H1 (cell line): ENCODE measurements at regions of chr16 and their contacts with region 1.

Region 1: DNA sequence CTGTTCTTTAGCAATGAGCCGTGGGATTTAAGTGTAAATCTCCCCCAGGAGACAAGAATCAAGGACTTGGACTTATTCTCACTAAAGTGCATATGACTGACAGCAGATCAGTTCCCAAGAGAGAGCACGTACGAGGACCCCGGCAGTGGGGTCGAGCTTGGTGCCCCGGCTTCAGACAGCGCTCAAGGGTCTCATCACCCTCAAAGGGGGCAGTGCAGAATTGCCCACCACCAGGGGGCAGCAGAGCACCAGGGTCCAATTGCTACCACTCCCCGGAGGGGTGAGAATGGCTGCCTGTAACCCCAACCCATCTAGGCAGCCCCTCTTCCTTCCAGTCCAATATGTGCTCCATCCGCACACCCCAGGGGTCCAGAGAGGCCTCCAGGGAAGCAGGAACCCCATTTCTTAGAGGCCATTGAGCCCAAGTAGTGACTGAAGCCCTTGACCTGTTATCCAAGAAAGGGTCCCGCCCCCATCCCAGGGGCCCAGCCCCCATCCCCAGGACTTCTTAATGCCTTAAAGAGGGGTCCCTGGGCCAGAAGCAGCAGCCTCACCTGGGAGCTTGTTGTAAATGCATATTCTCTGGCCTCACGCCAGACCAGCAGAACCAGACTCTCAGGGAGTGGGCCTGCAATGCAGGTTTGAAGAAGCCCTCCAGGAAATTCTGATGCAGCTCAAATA is 86.1 kb downstream of the ZDHHC7 start:
- DNase-seq: peak; percentile 29 to 95
- H3K4me3 ChIP-seq: no peak overlapping the region
- H3K27ac ChIP-seq: no peak overlapping the region
- H3K4me1 ChIP-seq: peaks cover 0 to 2% (median 0%) of the 10 kb centered on the region in 4 experiments; a peak in 1 of 7 replicates
- H3K27me3 ChIP-seq: no peaks in the 10 kb centered on the region
- CTCF ChIP-seq: peak; percentile 91 to 92 (median 92)
- EP300 ChIP-seq: no peak
- POLR2A ChIP-seq: no peak
- RAD21 ChIP-seq: peak; percentile 88 to 89

Region 2: GRCh38 chr16:84754353-84754856 is 170.8 kb before region 1 on chr16:
- CTCF ChIA-PET with region 1: interaction called, 23 read pairs
- POLR2A ChIA-PET with region 1: no interaction called
- DNase-seq: peak; percentile 33 to 76
- H3K4me3 ChIP-seq: no peak overlapping the region
- H3K27ac ChIP-seq: no peak overlapping the region
- H3K4me1 ChIP-seq: no peaks in the 10 kb centered on the region
- H3K27me3 ChIP-seq: no peaks in the 10 kb centered on the region
- CTCF ChIP-seq: peak in 2 of 3 experiments; percentile 73 to 79; a peak in 3 of 4 replicates
- EP300 ChIP-seq: no peak
- POLR2A ChIP-seq: no peak
- RAD21 ChIP-seq: peak; percentile 79 to 82

Region 3: GRCh38 chr16:84881702-84882521 is 43.3 kb before region 1 on chr16:
- CTCF ChIA-PET with region 1: interaction called, 15 read pairs
- POLR2A ChIA-PET with region 1: no interaction called
- DNase-seq: no peak
- H3K4me3 ChIP-seq: no peak overlapping the region
- H3K27ac ChIP-seq: no peak overlapping the region
- H3K4me1 ChIP-seq: peaks cover 7 to 20% (median 13%) of the 10 kb centered on the region in 4 experiments
- H3K27me3 ChIP-seq: no peaks in the 10 kb centered on the region
- CTCF ChIP-seq: no peak
- EP300 ChIP-seq: no peak
- POLR2A ChIP-seq: no peak
- RAD21 ChIP-seq: no peak

Region 4: DNA sequence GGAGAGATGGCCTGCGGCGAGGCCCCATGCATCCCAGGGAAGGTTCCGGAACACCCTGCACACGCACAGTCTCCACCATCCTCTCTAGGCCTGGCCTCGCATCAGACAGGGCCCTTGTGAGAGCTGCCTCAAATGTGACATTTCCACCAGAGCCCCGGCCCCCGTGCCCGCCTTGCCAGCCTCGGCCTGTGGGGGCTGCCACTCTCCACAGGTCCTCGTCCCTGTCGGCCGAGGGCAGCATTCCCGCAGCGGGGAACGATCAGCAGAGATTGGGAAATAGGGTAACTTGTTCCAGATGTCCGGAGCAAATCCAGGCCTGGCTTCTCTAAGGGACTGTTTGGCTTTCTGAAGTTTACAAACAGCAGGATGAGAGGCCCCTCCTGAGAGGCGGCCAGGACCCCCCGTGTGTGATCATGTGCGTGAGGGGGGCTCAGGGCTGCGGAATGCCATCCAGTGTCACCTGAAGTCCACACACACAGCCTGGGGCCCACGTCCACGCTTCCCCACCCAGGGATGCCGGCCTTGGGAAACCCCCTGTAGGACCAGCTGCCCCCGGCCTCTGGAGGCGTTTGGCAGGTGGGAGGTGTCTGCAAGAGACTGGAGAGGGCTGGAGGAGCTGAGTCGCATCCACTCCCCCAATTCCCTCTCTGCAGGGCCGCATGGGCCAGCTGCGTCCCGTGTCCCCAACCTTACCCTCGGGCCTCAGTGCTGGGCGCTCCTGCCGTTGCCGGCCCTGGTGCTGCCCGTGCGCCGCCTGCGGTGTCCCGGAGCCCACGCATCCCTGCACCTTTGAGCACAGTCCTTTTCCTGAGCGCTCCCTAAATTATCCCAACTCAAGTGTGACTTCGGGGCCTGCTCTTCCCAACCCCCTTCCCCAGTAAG is 15.7 kb after region 1 on chr16:
- CTCF ChIA-PET with region 1: interaction called, 27 read pairs
- POLR2A ChIA-PET with region 1: interaction called, 3 read pairs
- DNase-seq: no peak
- H3K4me3 ChIP-seq: no peak overlapping the region
- H3K27ac ChIP-seq: no peak overlapping the region
- H3K4me1 ChIP-seq: peaks cover 0 to 3% (median 0%) of the 10 kb centered on the region in 4 experiments; a peak in 1 of 7 replicates
- H3K27me3 ChIP-seq: no peaks in the 10 kb centered on the region
- CTCF ChIP-seq: no peak
- EP300 ChIP-seq: no peak
- POLR2A ChIP-seq: no peak
- RAD21 ChIP-seq: no peak

Region 5: GRCh38 chr16:84970447-84971127 is 45.4 kb after region 1 on chr16:
- CTCF ChIA-PET with region 1: interaction called, 170 read pairs
- POLR2A ChIA-PET with region 1: interaction called, 5 read pairs
- DNase-seq: peak; percentile 67 to 91
- H3K4me3 ChIP-seq: no peak overlapping the region
- H3K27ac ChIP-seq: no peak overlapping the region
- H3K4me1 ChIP-seq: no peaks in the 10 kb centered on the region
- H3K27me3 ChIP-seq: no peaks in the 10 kb centered on the region; a peak in 1 of 7 replicates
- CTCF ChIP-seq: peak; percentile 86 to 96 (median 95)
- EP300 ChIP-seq: no peak
- POLR2A ChIP-seq: no peak
- RAD21 ChIP-seq: peak; percentile 96 to 97

Region 6: GRCh38 chr16:85072947-85073346 is 147.7 kb after region 1 on chr16:
- CTCF ChIA-PET with region 1: no interaction called
- POLR2A ChIA-PET with region 1: no interaction called
- DNase-seq: no peak
- H3K4me3 ChIP-seq: no peak overlapping the region
- H3K27ac ChIP-seq: no peak overlapping the region
- H3K4me1 ChIP-seq: peaks cover 0 to 13% (median 4%) of the 10 kb centered on the region in 4 experiments; a peak in 5 of 7 replicates
- H3K27me3 ChIP-seq: peaks cover 0 to 11% (median 7%) of the 10 kb centered on the region in 4 experiments; a peak in 4 of 7 replicates
- CTCF ChIP-seq: no peak
- EP300 ChIP-seq: no peak
- POLR2A ChIP-seq: no peak
- RAD21 ChIP-seq: no peak